ENCODE measurements at regions of chr5 and their contacts with region 1.

Region 1: GRCh38 chr5:78964887-78965286 is 20.2 kb downstream of the ARSB start:
- DNase-seq: no peak
- ATAC-seq: peak; percentile 65

Region 2: DNA sequence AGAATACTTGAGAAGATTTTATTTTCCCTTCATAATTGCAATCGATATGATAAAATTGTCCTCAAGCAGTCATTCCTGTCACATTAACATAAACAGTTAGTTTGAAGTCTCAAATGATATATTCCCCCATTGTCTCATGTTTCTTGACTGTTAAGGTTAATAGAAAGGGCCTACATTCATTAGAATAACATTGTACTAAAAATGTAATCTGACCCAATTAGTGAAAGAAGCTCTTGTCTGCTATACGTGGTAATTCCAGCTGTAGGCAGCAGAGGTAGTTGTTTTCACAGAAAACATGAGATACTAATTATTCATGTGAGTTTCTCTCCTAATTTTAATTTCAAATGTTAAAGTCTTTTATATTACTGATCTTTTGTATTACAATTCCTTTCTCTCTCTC is 644.5 kb before region 1 on chr5:
- intact Hi-C with region 1: loop called (anchors 5 kb)
- DNase-seq: no peak
- ATAC-seq: no peak

Region 3: DNA sequence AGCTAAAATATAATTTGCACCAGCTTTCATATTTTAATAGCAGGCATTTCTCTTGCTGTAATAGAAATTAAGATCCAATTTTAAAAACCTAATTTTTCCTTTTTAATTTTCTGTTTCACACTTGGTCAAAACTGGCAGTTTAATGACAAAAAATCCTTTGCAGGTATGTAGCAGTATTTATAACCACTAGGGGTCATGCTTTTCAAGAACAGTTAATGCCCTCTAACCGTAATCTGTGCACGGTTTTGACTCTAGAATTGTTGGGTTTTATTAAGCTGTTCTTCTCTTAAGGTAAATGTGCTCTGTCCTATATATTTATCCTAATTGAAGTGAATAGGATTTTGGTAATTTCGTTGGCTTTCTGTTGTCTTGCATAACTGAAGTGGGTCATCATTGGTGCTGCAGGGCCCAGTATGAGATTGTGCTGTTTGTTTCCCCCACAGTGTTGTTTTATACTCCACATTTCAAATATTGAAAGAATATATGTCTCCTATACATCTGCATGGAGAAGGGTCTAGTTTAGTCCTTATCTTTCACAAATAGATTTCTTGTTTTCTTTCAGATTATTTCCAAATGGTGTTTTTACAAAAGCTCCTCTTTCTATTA is 497.0 kb before region 1 on chr5:
- intact Hi-C with region 1: loop called (anchors 10 kb)
- DNase-seq: no peak
- ATAC-seq: peak; percentile 54

Region 4: DNA sequence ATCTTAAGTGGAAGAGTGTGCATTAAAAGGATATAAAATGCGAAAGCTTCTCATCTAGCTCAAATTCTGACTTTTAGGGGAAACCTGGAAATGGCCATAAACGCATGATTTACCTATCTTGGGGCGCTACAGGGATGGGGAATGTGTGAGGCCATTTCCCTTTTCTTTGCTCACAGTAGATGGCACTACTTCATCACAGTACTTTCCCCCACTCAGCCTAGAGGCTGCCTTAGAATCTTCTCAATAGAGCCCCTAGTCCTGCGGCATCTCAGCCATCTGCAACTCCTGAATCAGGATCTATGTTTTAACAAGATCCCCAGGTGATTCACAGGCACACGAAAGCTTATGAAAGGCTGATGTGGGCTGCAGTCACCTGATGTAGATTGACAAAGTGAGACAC is 427.1 kb before region 1 on chr5:
- intact Hi-C with region 1: loop called (anchors 2 kb)
- DNase-seq: no peak
- ATAC-seq: peak; percentile 72

Region 5: DNA sequence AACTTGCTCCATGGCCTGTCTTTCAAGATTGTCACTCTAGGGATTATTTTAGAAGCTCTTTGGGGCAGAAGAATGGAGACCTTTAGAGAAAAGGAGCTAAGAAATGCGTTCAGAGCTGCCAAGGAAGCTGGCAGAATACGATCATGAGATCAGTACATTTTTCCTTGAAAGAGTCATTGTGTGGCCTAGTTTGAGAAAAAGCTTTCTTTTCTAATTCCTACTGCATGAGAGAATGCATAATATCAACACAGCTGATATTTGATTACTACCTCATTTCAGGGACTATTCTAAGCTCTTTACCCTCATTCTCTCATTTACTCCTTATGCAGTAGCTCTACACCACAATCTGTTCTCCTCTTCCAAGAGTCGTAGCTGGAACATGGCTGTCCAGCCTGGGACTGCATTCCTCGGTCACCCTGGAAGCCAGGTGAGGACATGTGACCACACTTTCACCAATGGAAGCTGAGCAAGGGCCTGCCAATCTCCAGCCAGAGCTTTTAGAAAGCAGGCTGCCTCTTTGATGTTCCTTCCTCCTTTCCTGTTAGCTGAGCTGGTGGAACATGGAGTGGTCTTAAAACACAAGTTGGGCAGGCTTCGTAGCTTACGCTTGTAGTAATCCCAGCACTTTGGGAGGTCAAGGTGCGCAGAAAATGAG is 217.1 kb before region 1 on chr5:
- intact Hi-C with region 1: no loop called
- DNase-seq: no peak
- ATAC-seq: no peak

Region 6: GRCh38 chr5:78899922-78900362 is 64.9 kb before region 1 on chr5:
- intact Hi-C with region 1: loop called (anchors 2 kb)
- DNase-seq: no peak
- ATAC-seq: no peak